Activated CD4-positive, alpha-beta T cell treated with anti-CD3 and anti-CD28 coated beads, Interleukin-2, amount 10 ng/mL, durations not matched to agents 24 days and 14 days (primary cell): ENCODE measurements at regions of chr11 and their contacts with region 1.

Region 1: GRCh38 chr11:72030472-72031045 is 31.9 kb downstream of the IL18BP start:
- DNase-seq: no peak
- H3K4me3 Mint-ChIP-seq: no peak overlapping the region
- H3K27ac Mint-ChIP-seq: no peak overlapping the region
- H3K4me1 Mint-ChIP-seq: peaks cover 19% of the 10 kb centered on the region
- H3K27me3 Mint-ChIP-seq: no peaks in the 10 kb centered on the region

Region 2: DNA sequence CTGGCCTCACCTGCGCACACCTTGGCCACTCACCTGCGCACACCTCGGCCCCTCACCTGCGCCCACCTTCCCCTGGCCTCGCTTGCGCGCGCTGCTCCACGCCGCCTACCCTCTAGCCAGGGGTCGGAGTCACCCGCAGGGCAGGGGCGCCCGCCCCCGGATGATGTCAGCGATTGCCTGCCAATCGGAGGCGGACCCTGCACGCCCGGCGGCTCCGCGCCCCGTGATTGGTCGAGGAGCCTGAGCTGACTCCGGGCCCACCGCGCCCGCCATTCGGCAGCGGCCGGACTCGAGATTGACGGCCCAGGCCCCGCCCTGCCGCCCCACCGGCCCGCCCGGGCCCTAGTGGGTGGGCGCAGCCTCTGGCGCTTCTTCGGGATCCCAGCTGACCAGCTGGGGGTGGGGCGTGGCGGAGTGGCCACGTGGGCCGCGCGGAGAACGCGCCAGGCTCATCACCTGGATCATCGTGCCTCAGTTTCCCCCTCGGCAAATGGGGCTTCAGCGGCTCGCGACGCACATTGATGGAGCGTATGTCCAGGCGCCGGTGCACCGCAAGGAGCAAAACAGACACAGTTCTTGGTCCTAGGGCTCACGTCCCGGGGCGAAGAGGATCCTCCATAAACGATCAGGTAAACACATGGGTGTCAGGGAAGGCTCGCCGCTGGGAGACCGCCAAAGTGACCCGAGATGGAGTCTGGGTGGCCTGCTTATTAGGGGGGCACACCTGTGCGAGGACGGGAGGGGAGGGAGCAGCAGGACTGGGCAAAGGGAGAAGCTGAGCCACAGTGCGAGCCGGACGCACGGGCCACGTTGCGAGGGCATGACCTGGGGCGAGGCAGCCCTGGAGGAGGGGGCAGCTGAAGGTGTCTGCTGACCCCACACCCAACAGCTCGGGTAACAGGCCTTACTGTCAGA is 582.0 kb before region 1 on chr11 and contains the start of gene DHCR7:
- intact Hi-C with region 1: no loop called
- DNase-seq: peak; percentile 99
- H3K4me3 Mint-ChIP-seq: peak within 1 kb of the TSS; percentile 93
- H3K27ac Mint-ChIP-seq: peak within 1 kb of the TSS; percentile 89
- H3K4me1 Mint-ChIP-seq: peaks cover 50% of the 10 kb centered on the region
- H3K27me3 Mint-ChIP-seq: no peaks in the 10 kb centered on the region
- total RNA-seq, gene DHCR7: 112 and 116 TPM in 2 replicates

Region 3: DNA sequence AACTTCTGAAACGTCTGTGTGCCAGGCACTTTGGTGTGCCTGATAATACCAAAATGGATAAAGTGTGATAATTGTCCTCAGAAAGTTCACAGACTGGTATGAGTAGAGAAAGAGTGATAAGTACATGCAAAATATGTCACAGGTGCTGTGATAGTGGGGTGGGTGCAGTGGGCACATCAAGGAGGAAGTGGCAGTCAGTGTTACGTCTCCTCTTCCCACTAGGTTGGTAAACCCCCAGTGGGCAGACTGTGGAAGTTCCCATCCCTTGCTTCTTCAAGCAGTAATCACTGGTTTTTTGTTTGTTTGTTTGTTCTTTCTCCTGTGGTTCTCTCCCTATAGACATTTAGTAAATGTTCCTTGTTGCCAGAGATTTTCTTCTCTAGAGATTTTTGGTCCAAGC is 96.3 kb before region 1 on chr11:
- intact Hi-C with region 1: no loop called
- DNase-seq: no peak
- H3K4me3 Mint-ChIP-seq: no peak overlapping the region
- H3K27ac Mint-ChIP-seq: no peak overlapping the region
- H3K4me1 Mint-ChIP-seq: peaks cover 37% of the 10 kb centered on the region
- H3K27me3 Mint-ChIP-seq: no peaks in the 10 kb centered on the region

Region 4: GRCh38 chr11:72015511-72016171 is 14.9 kb before region 1 on chr11:
- intact Hi-C with region 1: no loop called
- DNase-seq: peak; percentile 68
- H3K4me3 Mint-ChIP-seq: no peak overlapping the region
- H3K27ac Mint-ChIP-seq: no peak overlapping the region
- H3K4me1 Mint-ChIP-seq: no peaks in the 10 kb centered on the region
- H3K27me3 Mint-ChIP-seq: no peaks in the 10 kb centered on the region

Region 5: DNA sequence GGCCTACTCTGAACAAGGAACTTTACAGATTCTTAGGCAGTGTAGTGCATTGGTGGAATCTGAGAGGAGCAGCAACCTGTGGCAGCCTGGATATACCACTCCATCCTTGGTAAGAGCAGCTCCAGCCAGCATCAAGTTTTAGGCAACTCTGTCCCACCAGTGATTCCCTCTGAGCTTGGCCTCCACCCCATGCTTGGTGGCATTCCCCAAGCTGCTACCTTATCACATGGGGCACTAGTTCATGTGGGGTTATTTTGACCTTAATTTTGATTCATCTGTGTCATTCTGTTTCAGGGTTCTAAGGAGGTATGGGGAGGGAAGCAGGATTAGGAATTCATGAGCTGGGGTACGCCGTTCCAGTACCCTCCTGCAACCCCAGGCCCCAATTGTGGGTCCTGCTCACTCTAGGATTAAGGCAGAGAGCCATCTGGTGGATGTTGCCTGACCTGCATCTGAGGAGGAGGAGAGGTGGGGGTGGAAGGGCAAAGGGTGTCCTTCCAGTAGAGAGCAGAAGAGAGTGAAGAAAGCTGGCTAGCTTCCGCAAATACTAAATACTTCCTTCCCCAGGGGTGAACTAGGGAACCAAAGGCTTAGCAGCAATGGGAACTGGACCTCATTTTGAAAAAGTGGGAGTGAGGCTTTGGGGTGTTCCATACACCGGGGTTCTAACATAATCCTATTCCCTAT is 60.6 kb after region 1 on chr11:
- intact Hi-C with region 1: loop called (anchors 1 kb)
- DNase-seq: peak; percentile 91
- H3K4me3 Mint-ChIP-seq: no peak overlapping the region
- H3K27ac Mint-ChIP-seq: no peak overlapping the region
- H3K4me1 Mint-ChIP-seq: peaks cover 10% of the 10 kb centered on the region
- H3K27me3 Mint-ChIP-seq: no peaks in the 10 kb centered on the region

Region 6: GRCh38 chr11:72141066-72141465 is 110.5 kb after region 1 on chr11:
- intact Hi-C with region 1: loop called (anchors 1 kb)
- DNase-seq: peak; percentile 70
- H3K4me3 Mint-ChIP-seq: peak overlapping the region; percentile 18
- H3K27ac Mint-ChIP-seq: peak overlapping the region; percentile 60
- H3K4me1 Mint-ChIP-seq: peaks cover 27% of the 10 kb centered on the region
- H3K27me3 Mint-ChIP-seq: peaks cover 2% of the 10 kb centered on the region

Region 7: GRCh38 chr11:72179804-72180396 is 149.3 kb after region 1 on chr11:
- intact Hi-C with region 1: loop called (anchors 5 kb)
- DNase-seq: no peak
- H3K4me3 Mint-ChIP-seq: no peak overlapping the region
- H3K27ac Mint-ChIP-seq: peak overlapping the region; percentile 6
- H3K4me1 Mint-ChIP-seq: peaks cover 5% of the 10 kb centered on the region
- H3K27me3 Mint-ChIP-seq: peaks cover 22% of the 10 kb centered on the region